Activated naive CD4-positive, alpha-beta T cell treated with anti-CD3 and anti-CD28 coated beads, Interleukin-2, amount 10 ng/mL, durations not matched to agents 7 days and 5 days (primary cell): ENCODE measurements at regions of chr14 and their contacts with region 1.

Region 1: DNA sequence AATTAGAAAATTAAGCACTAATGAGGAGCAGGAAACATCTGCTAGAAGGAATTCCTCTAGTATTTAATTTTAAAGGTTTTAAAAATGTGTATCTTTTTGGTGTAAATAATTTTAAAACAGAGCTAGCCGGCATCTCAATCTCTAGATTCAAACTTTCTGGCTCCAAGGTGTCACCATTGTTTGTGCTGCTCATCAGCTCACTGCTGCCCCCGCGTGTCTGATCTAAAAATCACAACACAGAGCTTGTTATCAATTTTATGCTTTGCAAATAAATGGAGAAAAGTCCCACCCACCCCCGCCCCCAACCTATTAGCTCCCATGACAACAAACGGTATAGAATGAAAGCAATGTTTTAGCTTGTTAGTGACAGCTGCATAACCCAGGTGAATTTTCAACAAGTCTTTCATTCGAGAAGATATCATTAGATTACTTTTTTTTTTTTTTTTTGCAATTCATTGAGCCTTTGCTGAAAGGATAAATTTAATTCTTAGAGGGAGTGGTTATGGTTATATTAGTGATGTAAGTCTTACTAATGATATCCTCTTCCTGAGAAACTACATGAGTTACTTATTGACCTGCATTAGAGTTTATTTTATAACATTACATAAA is 11.3 kb upstream of the ABHD12B start:
- DNase-seq: peak; percentile 93
- H3K4me3 Mint-ChIP-seq: peak overlapping the region; percentile 81
- H3K27ac Mint-ChIP-seq: peak overlapping the region; percentile 89
- H3K4me1 Mint-ChIP-seq: peaks cover 22% of the 10 kb centered on the region
- H3K27me3 Mint-ChIP-seq: peaks cover 38% of the 10 kb centered on the region

Region 2: GRCh38 chr14:50599700-50600444 is 260.7 kb before region 1 on chr14:
- CTCF ChIA-PET with region 1: interaction called, 29 read pairs
- DNase-seq: no peak
- H3K4me3 Mint-ChIP-seq: no peak overlapping the region
- H3K27ac Mint-ChIP-seq: no peak overlapping the region
- H3K4me1 Mint-ChIP-seq: no peaks in the 10 kb centered on the region
- H3K27me3 Mint-ChIP-seq: no peaks in the 10 kb centered on the region

Region 3: DNA sequence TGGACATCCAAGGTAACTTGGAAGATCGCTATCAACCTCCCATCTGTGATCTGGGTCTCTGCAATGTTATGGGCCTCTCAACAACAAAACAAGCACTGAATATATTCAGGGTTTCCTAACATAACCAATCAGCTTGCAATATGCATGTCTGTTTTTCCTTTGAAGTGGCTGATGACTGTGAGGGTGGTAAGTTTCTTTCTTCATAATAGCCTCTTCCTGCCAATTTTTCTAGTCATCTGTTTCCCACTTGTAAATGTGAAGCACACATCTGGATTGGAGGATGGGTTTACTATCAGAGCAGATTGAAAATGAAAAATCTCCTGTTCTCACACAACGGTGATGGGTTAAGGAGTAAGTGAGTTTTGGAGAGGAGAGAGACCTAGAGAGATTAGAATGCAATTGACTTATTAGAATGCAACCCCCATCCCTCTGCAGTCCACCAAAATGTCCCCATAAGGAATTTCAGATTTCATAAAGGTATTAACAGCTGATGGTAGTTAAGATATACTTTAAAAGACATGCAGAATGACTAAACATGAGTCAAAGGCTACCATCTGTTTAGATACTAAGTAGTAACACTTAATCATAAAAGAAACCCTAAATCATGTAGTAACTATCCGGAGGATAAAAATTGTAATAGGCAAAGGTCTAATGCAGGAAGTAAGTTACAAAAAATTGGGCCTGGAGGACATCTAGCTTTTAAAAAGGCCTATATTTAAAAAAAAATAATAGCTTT is 134.0 kb before region 1 on chr14:
- CTCF ChIA-PET with region 1: interaction called, 11 read pairs
- DNase-seq: peak; percentile 29
- H3K4me3 Mint-ChIP-seq: peak overlapping the region; percentile 11
- H3K27ac Mint-ChIP-seq: peak overlapping the region; percentile 91
- H3K4me1 Mint-ChIP-seq: peaks cover 32% of the 10 kb centered on the region
- H3K27me3 Mint-ChIP-seq: no peaks in the 10 kb centered on the region

Region 4: DNA sequence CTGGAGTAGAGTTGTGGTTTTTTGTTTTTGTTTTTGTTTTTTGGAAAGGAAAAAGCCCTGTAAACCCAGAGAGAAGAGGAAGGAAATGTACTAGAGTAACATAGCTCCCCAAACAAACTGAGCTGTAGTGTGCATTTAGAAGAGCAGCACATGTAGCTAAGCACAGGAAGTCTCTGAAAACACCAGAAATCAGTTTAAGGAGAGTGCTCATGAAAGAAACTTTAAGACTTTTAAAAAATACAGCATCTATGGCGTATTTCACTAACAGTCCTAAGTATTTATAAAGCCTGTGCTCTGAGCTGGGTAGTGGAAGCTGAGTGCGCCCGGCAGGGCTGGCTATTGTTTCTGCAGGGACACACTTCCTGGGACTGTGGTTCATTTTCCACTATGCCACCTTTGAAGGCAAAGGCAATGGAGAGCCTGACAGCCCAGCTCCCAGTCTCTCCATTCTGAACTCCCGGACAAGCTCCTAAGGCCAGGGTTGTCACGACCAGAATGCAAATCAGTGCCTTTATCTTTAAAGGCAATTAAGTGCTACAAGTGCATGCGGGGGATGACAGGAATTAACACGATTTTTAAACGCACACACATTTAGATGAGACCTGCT is 75.0 kb before region 1 on chr14:
- CTCF ChIA-PET with region 1: interaction called, 50 read pairs
- DNase-seq: no peak
- H3K4me3 Mint-ChIP-seq: peak overlapping the region; percentile 13
- H3K27ac Mint-ChIP-seq: peak overlapping the region; percentile 88
- H3K4me1 Mint-ChIP-seq: peaks cover 62% of the 10 kb centered on the region
- H3K27me3 Mint-ChIP-seq: no peaks in the 10 kb centered on the region

Region 5: DNA sequence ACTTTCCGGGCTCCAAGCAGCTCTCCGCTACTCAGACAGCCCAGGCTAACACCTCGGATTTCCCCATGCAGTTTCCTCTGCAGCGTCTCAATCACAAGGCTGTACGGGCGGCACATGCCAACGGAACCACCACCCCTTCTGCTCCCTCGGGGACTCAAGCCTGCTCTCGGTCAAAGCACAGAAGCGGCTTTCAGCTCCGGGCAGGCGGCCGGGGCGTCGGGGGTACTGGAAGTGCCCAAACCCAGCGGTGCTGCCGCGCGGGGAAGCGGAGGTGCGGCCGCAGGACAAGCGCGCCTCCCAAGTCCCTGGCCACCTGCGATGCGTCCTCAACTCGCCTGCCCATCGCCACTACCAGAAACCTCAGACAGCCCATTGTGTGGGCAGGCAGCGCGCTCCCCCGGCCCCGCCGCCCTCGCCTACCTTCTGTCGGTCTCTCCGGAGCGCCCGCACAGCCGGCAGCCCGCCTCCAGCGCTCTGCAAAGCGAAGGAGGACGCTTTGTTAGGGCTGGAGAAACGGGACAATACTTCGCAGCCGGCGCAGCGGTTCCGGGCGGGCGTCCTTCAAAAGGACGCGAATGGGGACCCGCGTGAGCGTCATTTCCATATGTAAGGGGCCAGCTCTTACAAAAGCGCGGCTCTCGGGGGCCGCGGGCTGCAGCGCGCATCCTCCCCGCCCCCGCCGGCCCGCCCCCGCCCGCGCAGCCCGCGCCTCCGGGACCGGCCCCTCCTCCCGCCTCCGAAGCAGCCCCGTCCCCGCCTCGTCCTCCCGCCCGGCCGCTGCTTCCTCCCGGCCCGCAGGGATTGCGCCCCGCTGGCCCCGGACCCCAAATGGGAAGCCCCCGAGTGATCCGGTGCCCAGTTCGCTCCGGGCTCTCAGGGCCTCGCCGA is 30.3 kb before region 1 on chr14:
- CTCF ChIA-PET with region 1: interaction called, 20 read pairs
- DNase-seq: peak; percentile 70
- H3K4me3 Mint-ChIP-seq: peak overlapping the region; percentile 97
- H3K27ac Mint-ChIP-seq: peak overlapping the region; percentile 85
- H3K4me1 Mint-ChIP-seq: peaks cover 59% of the 10 kb centered on the region
- H3K27me3 Mint-ChIP-seq: peaks cover 16% of the 10 kb centered on the region

Region 6: GRCh38 chr14:50871914-50872732 is 11.5 kb after region 1 on chr14 and contains the start of gene ABHD12B:
- CTCF ChIA-PET with region 1: interaction called, 10 read pairs
- DNase-seq: no peak
- H3K4me3 Mint-ChIP-seq: no peak within 1 kb of the TSS
- H3K27ac Mint-ChIP-seq: no peak within 1 kb of the TSS
- H3K4me1 Mint-ChIP-seq: peaks cover 29% of the 10 kb centered on the region
- H3K27me3 Mint-ChIP-seq: peaks cover 80% of the 10 kb centered on the region